Activated T-helper 1 cell treated with anti-CD3 and anti-CD28 coated beads, Interleukin-12 subunit alpha, Interleukin-12 subunit beta, Interleukin-2, Interleukin-4 antibody, amounts not matched to agents 30 ng/mL and 10 ng/mL and 1 ng/mL, durations not matched to agents 14 hours and 24 hours and 36 hours (primary cell): ENCODE measurements at regions of chrX and their contacts with region 1.

Region 1: DNA sequence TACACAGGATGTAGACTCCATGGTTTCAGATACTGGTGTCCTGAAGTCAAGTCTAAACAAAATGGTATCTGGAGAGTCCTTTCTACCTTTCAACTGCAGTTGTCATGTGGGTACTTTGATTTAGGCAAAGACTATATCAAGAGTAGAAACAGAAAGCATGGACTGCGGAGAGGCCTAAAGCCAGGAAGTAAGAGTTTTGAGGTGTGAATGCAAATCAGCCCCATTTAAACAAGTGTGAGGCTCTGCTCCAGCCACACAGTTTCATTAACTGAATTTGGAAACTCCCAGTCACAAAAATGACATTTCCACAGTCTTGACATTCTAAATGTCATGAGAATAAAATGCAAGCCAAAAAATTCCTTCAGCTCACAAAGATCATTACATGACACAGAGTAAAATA is 87.2 kb upstream of the MCF2 start:
- DNase-seq: peak; percentile 0
- H3K4me3 Mint-ChIP-seq: peak overlapping the region; percentile 39
- H3K27ac Mint-ChIP-seq: peak overlapping the region; percentile 56
- H3K4me1 Mint-ChIP-seq: peaks cover 22% of the 10 kb centered on the region
- H3K27me3 Mint-ChIP-seq: no peaks in the 10 kb centered on the region

Region 2: DNA sequence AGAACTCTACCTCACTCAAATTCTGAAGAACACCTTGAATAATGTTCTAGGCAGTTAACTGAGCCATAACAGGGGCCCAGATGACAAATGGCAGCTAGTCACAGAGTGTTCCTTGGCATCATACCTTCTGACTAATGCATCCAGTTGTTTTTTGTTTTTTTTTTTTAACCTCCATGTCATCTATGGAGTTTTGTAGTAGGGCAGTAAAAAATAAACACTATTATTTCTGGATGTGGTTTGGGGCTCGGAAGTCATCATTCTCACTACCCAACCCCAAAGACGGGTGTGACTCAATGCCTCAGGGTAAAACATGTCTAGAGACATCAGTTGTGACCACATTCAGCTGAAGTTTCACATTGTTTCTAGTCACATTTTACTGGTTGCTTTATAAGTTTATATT is 56.1 kb before region 1 on chrX:
- intact Hi-C with region 1: loop called (anchors 2 kb)
- DNase-seq: no peak
- H3K4me3 Mint-ChIP-seq: peak overlapping the region; percentile 46
- H3K27ac Mint-ChIP-seq: peak overlapping the region; percentile 69
- H3K4me1 Mint-ChIP-seq: peaks cover 20% of the 10 kb centered on the region
- H3K27me3 Mint-ChIP-seq: no peaks in the 10 kb centered on the region

Region 3: DNA sequence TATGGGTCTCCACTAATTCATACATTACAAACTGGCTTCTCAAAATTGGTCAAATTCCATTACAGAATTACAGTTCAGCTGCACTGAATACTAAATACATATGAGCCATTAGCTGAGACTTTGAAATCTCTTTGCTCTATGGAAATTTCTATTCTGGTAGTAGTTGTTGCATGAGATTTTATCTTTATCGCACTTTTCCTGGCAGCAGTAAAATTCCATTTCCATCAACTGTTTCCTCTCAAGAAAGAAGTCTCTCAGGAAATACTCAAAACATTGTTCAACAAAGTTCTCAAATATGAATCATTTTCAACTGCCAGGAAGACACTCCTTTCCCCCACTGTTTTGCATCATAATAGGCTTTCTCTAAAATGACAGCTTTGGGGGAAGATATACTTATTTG is 86.4 kb after region 1 on chrX:
- intact Hi-C with region 1: no loop called
- DNase-seq: no peak
- H3K4me3 Mint-ChIP-seq: no peak overlapping the region
- H3K27ac Mint-ChIP-seq: no peak overlapping the region
- H3K4me1 Mint-ChIP-seq: no peaks in the 10 kb centered on the region
- H3K27me3 Mint-ChIP-seq: no peaks in the 10 kb centered on the region